Cardiac septum (tissue), 1 donor: ENCODE measurements at regions of chr14 and their contacts with region 1.

Region 1: DNA sequence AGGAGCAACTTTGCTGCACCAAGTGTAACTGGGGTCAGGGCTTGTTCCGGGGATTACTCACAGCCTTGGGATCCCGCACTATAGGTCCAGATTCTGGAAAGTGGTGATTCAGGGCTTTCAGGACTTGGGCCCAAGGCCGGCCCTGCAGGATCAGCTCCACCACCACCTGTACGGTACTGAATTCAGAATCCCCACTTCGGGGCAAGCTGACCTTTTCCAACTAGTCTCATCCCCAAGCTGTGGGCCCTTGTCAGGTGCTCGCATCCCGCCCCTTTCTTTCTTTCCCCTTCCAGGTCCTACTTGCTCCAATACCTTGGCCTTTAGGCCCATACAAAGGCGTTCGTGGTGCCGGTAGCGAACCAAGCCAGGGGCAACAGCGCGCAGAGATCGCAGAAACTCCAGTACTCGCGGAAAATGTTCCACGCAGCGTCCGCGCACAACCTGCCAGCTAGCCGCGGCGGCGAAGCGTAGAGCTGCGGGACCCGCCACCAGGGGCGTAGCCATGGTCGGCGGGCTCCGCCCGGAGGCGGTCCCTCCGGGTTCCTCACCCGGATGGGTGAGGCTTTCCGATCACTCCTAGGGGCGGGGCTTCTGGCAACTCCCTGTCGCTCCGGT is 487 bp downstream of the TINF2 start:
- DNase-seq: peak; percentile 97

Region 2: DNA sequence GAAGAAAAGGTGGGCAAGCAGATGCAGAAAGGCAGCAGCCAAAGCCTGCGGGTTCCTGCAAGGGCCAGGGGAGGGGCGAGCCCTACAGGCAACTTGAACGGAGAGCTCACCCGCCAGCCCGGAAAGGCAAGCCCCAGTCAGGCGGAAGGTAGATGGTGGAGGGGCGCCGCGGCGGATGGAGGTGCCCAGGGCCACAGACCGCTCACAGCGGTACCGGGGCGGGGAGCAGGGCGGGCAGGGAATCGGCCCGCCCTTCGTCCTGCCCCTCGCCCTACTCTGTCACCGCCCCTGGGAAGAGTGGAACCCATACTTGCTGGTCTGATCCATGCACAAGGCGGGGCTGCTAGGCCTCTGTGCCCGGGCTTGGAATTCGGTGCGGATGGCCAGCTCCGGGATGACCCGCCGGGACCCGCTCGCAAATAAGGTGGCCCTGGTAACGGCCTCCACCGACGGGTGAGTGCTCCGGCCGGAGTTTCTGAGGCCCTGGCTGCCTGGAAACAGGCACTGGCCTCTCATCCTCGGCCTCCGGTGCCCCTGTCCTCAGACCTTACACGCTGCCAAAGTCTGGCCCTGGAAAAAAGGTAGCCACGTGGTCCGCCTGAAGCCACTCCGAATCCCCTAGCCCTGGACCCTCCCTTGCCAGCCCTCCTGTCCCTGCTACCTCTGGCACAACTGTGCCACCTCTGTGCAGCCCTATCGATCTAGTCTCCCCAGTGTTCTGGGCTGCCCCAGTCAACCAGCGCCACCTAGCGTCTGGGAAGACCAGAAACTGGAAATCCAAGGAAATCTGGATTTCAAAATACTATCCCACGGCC is 288.3 kb before region 1 on chr14 and contains the start of gene DHRS4:
- intact Hi-C with region 1: no loop called
- DNase-seq: peak; percentile 93
- total RNA-seq, gene DHRS4: 26.0 TPM

Region 3: DNA sequence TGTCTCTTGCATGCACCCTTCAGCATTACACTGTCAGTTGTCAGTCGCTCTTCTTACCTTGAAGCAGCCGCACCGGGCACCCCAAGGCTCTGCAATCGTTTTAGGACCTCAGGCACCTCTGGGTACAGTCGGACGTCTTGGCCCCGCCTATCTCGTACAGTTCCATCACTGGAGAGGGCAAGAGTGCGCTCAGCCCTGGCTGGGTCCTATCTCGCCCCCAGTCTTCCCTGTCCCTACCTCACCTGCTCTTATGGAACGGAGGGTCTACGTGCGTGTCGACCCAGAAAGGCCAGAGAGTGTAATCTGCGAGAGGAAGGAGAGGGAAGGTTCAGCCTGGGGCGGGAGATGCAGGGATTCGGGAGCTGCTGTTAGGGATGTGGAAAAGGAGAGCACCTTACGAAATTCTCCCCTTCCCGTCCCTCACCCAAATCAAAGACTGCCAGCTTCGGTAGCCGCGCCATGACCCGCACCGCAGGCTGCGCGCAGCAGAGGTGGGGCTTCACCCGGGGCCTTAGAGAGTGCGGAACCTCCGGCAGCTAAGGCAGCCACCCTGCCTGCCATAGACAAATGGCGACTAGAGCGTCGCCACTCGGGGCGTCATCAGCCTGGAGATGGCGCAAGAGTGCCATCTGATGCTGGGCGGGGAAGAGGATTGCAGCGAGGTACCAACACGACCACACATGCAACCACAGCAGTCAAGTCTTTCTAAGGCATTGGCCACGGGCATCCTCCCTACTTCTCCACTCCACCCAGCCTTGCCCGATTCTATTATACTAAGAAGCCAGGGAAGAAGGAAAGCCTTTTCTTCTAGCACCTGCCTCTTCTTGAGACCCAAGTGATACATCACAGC is 26.2 kb before region 1 on chr14 and contains the start of gene MDP1:
- intact Hi-C with region 1: loop called (anchors 2 kb)
- DNase-seq: peak; percentile 93
- total RNA-seq, gene MDP1: 16.7 TPM

Region 4: GRCh38 chr14:24299255-24300195 is 57.6 kb after region 1 on chr14 and contains the starts of genes DHRS1 and NOP9:
- intact Hi-C with region 1: loop called (anchors 1 kb)
- DNase-seq: peak; percentile 97
- total RNA-seq, gene DHRS1: 8.5 TPM
- total RNA-seq, gene NOP9: 28.3 TPM

Region 5: DNA sequence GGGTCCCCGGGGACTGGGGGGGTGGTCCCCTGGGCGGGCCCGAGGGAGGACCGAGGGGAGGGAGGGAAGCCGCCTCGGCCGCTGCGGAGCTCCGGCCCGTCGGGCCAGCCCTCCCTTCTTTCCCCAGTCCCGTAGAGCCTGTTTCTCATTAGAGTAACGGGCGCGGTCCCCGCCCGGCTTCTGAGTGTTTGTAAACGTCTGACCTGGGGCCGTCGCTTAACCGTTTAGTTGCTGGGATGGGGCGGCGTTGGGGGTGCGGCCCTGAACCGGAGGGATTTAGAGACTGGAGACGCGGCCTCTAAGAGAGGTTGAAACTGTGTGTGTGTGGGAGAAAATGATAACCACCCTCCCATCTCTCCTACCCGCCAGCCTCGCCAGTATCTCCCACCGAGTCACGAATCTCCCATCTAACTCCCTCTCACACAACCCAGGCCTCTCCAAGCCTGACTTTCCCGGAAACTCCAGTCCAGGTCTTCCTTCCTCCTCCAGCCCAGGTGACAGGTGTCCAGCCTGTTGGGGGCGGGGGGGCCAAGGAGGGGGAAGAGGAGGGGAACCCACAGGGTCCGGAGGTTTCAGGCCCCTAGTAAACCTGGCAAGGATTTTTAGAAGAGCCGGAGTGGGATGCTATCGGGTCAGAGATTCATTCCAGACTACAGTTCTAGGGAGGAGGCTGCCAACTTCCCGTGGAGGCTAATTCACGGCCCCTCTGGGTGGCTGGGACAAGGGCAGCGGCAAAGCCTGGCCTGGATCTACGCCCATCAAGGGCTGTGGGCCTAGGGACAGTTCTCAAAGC is 125.0 kb after region 1 on chr14:
- intact Hi-C with region 1: no loop called
- DNase-seq: peak; percentile 90